ENCODE measurements at regions of chr22 and their contacts with region 1.

Region 1: GRCh38 chr22:28247667-28248363 is 328.8 kb upstream of the PITPNB start:
- DNase-seq: no peak
- H3K4me3 ChIP-seq: no peak overlapping the region
- CTCF ChIP-seq: no peak

Region 2: GRCh38 chr22:28329186-28330073 is 81.6 kb after region 1 on chr22:
- in situ Hi-C with region 1: loop called (anchors 10 kb)
- DNase-seq: no peak
- H3K4me3 ChIP-seq: no peak overlapping the region
- CTCF ChIP-seq: no peak

Region 3: DNA sequence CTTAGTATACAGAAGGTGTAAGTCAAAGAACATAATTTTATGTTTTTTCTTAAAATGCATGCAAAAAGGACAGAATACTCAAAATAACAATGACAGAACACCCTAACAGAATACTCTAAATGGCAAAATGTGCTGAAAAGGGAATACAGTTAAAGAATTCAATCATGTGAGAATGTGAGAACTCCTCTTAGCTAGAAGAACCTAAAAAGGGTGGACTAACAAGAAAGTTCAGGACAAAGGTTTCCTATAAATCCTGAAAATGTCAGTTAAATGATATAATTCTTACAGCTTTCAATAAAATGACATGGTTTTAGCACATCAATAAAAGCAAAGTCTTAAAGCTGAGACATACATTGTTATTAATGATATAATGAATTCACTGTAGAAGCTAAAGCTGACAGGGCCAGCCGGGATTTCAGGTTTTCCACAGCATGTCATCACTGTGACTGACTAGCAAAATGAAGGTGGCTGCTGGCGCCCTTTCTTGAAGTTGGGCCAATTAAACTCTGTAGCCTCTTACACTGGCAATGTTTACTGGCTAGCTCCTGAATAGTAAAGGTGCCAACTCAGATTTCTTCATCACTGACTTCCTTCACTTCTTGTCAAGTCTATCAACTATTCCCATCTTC is 187.4 kb after region 1 on chr22:
- in situ Hi-C with region 1: loop called (anchors 10 kb)
- DNase-seq: no peak
- H3K4me3 ChIP-seq: no peak overlapping the region
- CTCF ChIP-seq: no peak